Mammary epithelial cell (primary cell): ENCODE measurements at regions of chr17 and their contacts with region 1.

Region 1: DNA sequence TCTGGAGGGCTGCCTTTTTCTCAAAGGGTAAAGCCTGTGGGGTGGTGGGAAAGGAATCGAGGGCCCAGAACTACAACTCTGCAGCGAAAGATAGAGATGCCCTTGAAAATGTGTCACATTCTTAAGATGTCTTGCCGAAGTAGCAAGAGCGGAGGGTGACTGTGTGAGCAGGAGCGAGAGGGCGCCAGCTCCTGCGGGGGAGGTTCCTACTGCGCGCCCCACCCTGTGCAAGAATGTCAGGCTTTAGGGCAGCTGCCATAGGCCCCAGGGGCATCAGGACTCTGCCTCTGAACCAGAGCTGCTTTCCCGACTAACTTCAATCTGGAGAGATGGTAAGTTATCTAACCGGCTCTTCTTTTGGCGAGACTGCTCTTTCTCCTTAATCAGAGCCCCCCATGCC is 11.8 kb upstream of the ITGAE start:
- DNase-seq: no peak
- H3K4me3 ChIP-seq: no peak overlapping the region
- H3K27ac ChIP-seq: no peak overlapping the region
- H3K4me1 ChIP-seq: peaks cover 19% of the 10 kb centered on the region
- H3K27me3 ChIP-seq: no peaks in the 10 kb centered on the region
- CTCF ChIP-seq: no peak

Region 2: GRCh38 chr17:3594051-3594800 is 218.5 kb before region 1 on chr17:
- CTCF ChIA-PET with region 1: no interaction called
- dilution Hi-C with region 1: no loop called
- in situ Hi-C with region 1: no loop called
- intact Hi-C with region 1: no loop called
- DNase-seq: no peak
- H3K4me3 ChIP-seq: no peak overlapping the region
- H3K27ac ChIP-seq: no peak overlapping the region
- H3K4me1 ChIP-seq: no peaks in the 10 kb centered on the region
- H3K27me3 ChIP-seq: no peaks in the 10 kb centered on the region
- CTCF ChIP-seq: no peak

Region 3: DNA sequence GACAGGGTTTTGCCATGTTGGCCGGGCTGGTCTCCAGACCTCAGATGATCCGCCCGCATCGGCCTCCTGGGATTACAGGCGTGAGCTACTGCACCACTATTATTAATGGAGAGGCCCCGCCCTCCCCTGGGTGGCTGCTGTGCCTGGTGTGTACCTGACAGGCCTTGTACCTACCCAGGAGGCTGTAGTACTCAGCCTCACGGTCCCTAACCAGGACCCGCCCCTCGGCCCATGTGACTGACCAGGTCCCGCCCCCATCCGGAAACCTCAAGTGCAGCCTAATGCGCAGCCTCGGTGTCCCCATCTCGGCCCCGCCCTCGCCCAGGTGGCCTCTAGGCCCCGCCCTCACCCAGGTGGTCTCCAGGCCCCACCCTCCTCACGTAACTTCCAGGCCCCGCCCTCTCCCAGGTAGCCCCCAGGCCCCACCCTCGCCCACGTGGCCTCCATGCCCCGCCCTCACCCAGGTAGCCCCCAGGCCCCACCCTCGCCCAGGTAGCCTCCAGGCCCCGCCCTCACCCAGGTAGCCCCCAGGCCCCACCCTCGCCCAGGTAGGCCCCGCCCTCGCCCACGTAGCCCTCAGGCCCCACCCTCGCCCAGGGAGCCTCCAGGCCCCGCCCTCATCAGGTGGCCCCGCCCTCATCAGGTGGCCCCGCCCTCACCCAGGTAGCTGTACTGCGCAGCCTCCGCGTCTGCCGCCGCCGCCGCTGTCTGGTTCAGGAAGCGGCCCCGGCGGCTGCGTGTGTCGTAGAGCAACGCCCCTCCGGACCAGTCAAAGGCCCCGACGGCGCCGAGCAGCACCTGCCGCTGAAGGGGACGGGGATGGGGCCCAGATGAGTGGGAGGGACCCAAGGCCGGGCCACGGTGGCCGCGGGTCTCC is 58.1 kb before region 1 on chr17:
- CTCF ChIA-PET with region 1: no interaction called
- dilution Hi-C with region 1: no loop called
- in situ Hi-C with region 1: no loop called
- intact Hi-C with region 1: loop called (anchors 5 kb)
- DNase-seq: peak; percentile 96
- H3K4me3 ChIP-seq: peak overlapping the region; percentile 61 to 89 (median 80)
- H3K27ac ChIP-seq: peak overlapping the region; percentile 15
- H3K4me1 ChIP-seq: peaks cover 9% of the 10 kb centered on the region
- H3K27me3 ChIP-seq: no peaks in the 10 kb centered on the region
- CTCF ChIP-seq: no peak

Region 4: DNA sequence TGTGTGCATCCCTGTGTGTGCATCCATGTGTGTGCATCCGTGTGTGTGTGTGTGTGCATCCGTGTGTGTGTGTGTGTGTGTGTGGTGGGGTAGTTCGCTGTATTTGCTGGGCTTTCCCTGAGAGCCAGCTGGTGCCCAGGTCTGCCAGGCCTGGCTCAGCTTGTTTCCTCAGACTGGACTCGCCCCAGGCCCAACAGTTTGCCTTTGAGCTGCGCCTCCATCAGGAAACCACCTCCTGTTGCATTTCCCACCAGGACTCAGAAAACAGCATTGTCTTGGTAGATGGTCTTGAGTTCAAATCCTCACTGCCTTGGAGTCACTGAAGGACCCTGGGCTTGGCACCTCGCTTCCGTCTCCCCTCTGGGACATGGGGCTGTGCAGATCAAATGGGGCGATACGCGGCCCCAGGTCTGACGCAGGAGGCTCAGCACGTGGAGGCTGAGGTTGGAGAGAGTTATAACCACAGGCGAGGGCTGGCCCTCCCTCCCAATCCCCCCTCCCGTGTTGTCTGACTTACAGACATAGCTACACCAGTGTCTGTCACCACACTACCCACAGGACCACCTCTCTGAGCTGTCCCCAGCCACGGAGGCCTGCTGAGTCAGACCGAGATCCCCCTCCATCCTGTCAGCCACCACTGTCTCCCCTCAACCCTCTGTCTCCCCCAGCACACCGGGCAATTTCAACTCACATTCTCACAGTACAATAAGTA is 16.5 kb before region 1 on chr17:
- CTCF ChIA-PET with region 1: no interaction called
- dilution Hi-C with region 1: no loop called
- in situ Hi-C with region 1: no loop called
- intact Hi-C with region 1: no loop called
- DNase-seq: no peak
- H3K4me3 ChIP-seq: no peak overlapping the region
- H3K27ac ChIP-seq: no peak overlapping the region
- H3K4me1 ChIP-seq: peaks cover 17% of the 10 kb centered on the region
- H3K27me3 ChIP-seq: no peaks in the 10 kb centered on the region
- CTCF ChIP-seq: no peak

Region 5: DNA sequence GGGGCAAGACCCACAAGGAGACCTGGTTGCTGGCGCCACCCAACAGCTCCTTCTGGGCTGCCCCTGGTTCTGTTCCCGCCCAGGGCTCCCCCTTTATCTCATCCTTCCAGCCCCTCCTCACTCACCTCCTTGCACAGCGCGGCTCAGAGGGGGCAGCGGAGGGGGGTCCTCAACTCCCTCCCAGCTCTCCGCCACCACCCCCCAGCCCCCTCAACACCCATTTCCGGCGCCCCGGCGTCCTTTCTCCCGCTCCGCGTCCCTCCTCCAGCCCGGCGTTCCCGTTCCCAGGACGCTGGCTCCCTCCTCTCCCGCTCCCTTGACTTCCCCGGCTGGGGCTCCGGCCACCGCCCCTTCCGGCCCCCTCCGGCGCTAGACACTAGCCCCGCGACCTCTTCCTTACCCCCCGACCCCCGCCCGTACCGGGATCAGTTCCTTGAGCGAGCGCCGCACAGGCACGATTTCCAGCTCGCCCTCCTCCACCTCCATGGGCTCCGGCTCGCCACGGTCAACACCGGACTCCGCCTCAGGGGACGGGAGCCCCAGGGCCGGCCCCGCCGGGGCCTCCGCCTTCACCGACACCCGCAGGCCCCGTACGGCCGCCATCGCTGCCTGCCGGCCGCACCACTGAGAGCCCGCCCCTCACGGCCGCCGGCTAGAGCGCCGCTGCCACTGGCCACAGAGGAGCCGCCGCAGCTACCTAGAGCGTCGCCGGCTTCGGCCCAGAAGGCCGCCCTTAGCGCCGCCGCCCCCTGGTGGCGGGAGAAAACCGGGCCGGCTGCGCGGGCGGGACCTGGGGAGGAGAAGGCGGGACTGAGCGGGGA is 33.1 kb after region 1 on chr17 and contains the start of gene NCBP3:
- CTCF ChIA-PET with region 1: no interaction called
- dilution Hi-C with region 1: loop called (anchors 5 kb)
- in situ Hi-C with region 1: no loop called
- intact Hi-C with region 1: loop called (anchors 2 kb)
- DNase-seq: peak; percentile 90
- H3K4me3 ChIP-seq: peak within 1 kb of the TSS; percentile 79 to 99 (median 93)
- H3K27ac ChIP-seq: peak within 1 kb of the TSS; percentile 76
- H3K4me1 ChIP-seq: peaks cover 16% of the 10 kb centered on the region
- H3K27me3 ChIP-seq: no peaks in the 10 kb centered on the region
- CTCF ChIP-seq: peak; percentile 65 to 96
- total RNA-seq, gene NCBP3: 21.2 to 42.0 TPM

Region 6: DNA sequence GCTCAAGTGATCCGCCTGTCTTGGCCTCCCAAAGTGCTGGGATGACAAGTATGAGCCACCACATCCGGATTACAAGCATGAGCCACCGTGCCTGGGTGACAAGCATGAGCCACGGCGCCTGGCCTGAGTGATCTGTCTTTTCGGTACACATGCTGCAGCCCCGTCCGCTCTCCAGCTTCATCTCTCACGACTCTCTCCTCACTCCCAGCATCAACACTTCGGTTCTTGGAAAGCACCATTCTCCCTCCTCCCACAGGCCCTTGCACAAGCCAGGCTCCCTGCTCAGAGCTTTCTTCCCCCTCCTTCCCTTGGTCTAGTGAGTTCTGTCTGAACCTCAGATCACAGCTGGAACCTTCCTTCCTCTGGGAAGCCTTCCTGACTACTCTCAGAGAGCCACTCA is 39.8 kb after region 1 on chr17:
- CTCF ChIA-PET with region 1: no interaction called
- dilution Hi-C with region 1: loop called (anchors 5 kb)
- in situ Hi-C with region 1: no loop called
- intact Hi-C with region 1: loop called (anchors 2 kb)
- DNase-seq: no peak
- H3K4me3 ChIP-seq: no peak overlapping the region
- H3K27ac ChIP-seq: no peak overlapping the region
- H3K4me1 ChIP-seq: peaks cover 3% of the 10 kb centered on the region
- H3K27me3 ChIP-seq: no peaks in the 10 kb centered on the region
- CTCF ChIP-seq: no peak